A673 (cell line): ENCODE measurements at regions of chr2 and their contacts with region 1.

Region 1: GRCh38 chr2:227766373-227766883 is 20.7 kb downstream of the SCYGR8 start:
- DNase-seq: peak; percentile 79
- H3K4me3 ChIP-seq: no peak overlapping the region
- H3K27ac ChIP-seq: no peak overlapping the region
- H3K4me1 ChIP-seq: peaks cover 9% of the 10 kb centered on the region
- H3K27me3 ChIP-seq: no peaks in the 10 kb centered on the region
- CTCF ChIP-seq: peak; percentile 92

Region 2: DNA sequence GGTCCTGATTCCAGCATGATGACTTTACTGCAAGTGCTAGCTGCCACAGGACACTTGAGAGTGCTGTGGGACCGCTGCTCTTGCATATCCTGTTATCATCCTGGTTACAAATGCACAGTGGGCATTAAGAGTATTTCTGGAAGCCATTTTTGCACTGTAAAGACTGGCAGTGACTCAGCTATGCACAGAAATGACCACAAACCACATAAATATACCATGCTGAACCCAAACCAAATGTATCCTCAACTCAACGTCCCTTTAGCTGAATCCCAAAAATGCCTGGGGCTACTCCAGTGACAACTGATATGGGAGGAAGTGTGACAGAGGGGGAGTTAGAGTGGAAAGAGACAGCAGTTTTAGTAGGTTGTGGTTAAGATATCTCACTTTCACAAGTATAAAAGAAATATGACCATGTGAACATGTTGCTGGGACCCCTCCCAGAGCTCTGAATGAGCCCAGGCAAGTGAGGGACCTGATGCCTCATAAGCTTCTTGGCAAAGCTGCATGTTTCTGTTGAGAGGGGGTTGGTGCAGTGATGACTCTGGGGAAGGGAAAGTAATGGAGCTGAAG is 893.3 kb before region 1 on chr2:
- CTCF ChIA-PET with region 1: no interaction called
- POLR2A ChIA-PET with region 1: no interaction called
- intact Hi-C with region 1: no loop called
- DNase-seq: no peak
- H3K4me3 ChIP-seq: no peak overlapping the region
- H3K27ac ChIP-seq: no peak overlapping the region
- H3K4me1 ChIP-seq: no peaks in the 10 kb centered on the region
- H3K27me3 ChIP-seq: no peaks in the 10 kb centered on the region
- CTCF ChIP-seq: no peak

Region 3: GRCh38 chr2:227238238-227239237 is 527.9 kb before region 1 on chr2:
- CTCF ChIA-PET with region 1: interaction called, 3 read pairs
- POLR2A ChIA-PET with region 1: no interaction called
- intact Hi-C with region 1: loop called (anchors 5 kb)
- DNase-seq: peak; percentile 71
- H3K4me3 ChIP-seq: no peak overlapping the region
- H3K27ac ChIP-seq: no peak overlapping the region
- H3K4me1 ChIP-seq: no peaks in the 10 kb centered on the region
- H3K27me3 ChIP-seq: no peaks in the 10 kb centered on the region
- CTCF ChIP-seq: peak; percentile 98

Region 4: DNA sequence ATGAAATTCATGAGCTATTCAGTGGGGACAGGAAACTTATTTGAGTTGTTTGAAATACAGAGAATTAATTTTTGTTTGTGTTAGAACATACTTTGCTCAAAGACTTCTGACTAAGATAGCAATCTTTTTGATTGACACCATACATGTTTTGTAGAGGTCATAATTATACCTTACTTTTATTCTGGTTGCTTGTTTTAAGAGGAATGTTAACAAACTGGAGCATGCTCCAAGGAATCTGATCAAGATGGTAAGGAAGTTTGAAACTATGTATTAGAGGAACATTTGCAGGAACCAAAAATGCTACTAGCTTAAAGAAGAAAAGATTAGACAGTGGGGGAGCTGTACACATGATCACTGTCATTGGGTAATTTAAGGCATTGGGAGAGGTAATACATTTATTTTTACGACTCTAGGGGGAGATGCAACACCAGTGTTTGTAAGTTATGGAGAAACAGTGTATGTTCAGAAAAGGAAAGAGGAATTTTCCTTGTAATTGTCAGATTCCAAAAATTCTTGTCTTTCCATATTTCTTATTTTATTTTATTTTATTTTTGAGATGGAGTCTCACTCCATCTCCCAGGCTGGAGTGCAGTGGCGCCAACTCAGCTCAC is 286.5 kb before region 1 on chr2:
- CTCF ChIA-PET with region 1: interaction called, 9 read pairs
- POLR2A ChIA-PET with region 1: no interaction called
- intact Hi-C with region 1: loop called (anchors 2 kb)
- DNase-seq: peak; percentile 81
- H3K4me3 ChIP-seq: no peak overlapping the region
- H3K27ac ChIP-seq: peak overlapping the region; percentile 12
- H3K4me1 ChIP-seq: peaks cover 43% of the 10 kb centered on the region
- H3K27me3 ChIP-seq: no peaks in the 10 kb centered on the region
- CTCF ChIP-seq: peak; percentile 60

Region 5: DNA sequence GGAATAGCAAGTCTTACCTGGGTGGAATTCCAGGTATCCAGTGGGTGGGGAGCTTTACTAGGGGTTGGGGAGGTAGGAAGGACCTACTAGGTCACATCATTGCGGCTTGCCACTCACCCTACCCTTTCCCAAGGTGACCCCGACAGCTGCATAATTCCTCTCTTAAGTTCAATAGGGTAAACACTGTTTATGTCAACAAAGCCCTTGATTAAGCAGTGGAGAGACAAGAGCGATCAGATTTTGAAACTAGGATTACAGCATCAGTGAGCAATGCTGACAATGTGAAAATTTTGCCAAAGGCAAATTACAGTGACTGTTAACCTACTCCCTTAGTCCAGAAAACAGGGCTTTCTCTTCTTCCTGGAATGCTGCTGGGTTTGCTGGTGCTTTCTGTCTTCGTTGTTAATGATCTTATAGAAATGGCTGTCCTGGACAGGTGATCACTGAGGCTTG is 63.1 kb before region 1 on chr2:
- CTCF ChIA-PET with region 1: no interaction called
- POLR2A ChIA-PET with region 1: no interaction called
- intact Hi-C with region 1: no loop called
- DNase-seq: no peak
- H3K4me3 ChIP-seq: no peak overlapping the region
- H3K27ac ChIP-seq: no peak overlapping the region
- H3K4me1 ChIP-seq: no peaks in the 10 kb centered on the region
- H3K27me3 ChIP-seq: no peaks in the 10 kb centered on the region
- CTCF ChIP-seq: no peak